ENCODE measurements at regions of chr15 and their contacts with region 1.

Region 1: GRCh38 chr15:23629234-23629805 is 18.3 kb downstream of the MAGEL2 start:
- DNase-seq: no peak
- H3K4me3 ChIP-seq: no peak overlapping the region
- H3K27ac ChIP-seq: no peak overlapping the region
- H3K4me1 ChIP-seq: no peaks in the 10 kb centered on the region
- H3K27me3 ChIP-seq: peaks cover 25 to 58% (median 33%) of the 10 kb centered on the region in 4 experiments
- CTCF ChIP-seq: peak in 2 of 3 experiments; percentile 29 to 44; a peak in 2 of 4 replicates
- EP300 ChIP-seq: no peak
- POLR2A ChIP-seq: no peak
- RAD21 ChIP-seq: peak; percentile 44 to 48

Region 2: DNA sequence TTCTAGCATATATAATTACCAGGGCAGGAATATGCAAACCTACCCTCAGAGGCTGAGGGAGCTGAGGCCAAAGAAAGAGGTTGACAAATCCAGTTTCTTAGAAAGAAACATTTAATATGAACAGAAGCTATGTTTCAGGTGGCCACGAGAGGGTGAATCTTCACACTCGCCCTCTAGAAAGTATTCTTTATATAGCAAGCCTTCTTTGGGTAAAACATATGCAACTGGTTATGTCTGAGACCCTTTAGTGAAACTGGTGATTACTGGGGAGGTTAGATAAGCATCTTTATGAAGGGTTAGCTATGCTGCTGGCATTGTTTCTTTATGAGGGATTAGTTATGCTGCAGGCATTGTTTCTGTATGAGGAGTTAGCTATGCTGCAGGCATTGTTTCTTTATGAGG is 131.6 kb before region 1 on chr15:
- CTCF ChIA-PET with region 1: interaction called, 10 read pairs
- POLR2A ChIA-PET with region 1: no interaction called
- DNase-seq: no peak
- H3K4me3 ChIP-seq: no peak overlapping the region
- H3K27ac ChIP-seq: no peak overlapping the region
- H3K4me1 ChIP-seq: no peaks in the 10 kb centered on the region
- H3K27me3 ChIP-seq: no peaks in the 10 kb centered on the region
- CTCF ChIP-seq: peak in 2 of 3 experiments; percentile 12 to 42; a peak in 2 of 4 replicates
- EP300 ChIP-seq: no peak
- POLR2A ChIP-seq: no peak
- RAD21 ChIP-seq: peak in 1 of 2 experiments; percentile 36; a peak in 2 of 4 replicates

Region 3: DNA sequence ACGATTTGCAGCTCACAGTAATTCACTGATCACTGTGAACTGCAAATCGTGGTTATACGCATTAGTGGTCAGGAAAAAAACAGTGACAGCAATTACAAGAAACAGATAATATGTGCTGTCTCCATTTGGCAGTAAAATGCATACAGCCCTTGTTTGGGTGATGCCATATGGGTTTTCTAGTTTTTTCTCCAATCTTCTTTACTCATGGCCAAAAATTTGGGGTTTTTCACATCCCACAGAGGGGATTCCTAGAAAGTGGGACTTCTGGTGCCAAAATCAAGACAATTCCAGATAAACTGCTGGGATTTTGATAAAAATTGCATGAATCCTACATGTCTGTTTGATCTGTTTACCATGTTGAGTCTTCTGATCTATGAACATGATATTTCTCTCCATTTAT is 42.2 kb after region 1 on chr15:
- CTCF ChIA-PET with region 1: no interaction called
- POLR2A ChIA-PET with region 1: no interaction called
- DNase-seq: no peak
- H3K4me3 ChIP-seq: no peak overlapping the region
- H3K27ac ChIP-seq: no peak overlapping the region
- H3K4me1 ChIP-seq: no peaks in the 10 kb centered on the region
- H3K27me3 ChIP-seq: no peaks in the 10 kb centered on the region
- CTCF ChIP-seq: no peak
- EP300 ChIP-seq: no peak
- POLR2A ChIP-seq: no peak
- RAD21 ChIP-seq: no peak

Measured in H1 (cell line).